Adrenal gland (tissue), 19 donors: ENCODE measurements at regions of chr13 and their contacts with region 1.

Region 1: GRCh38 chr13:108322206-108322824 is 52.8 kb downstream of the TNFSF13B start:
- DNase-seq: no peak
- H3K4me3 ChIP-seq: no peak overlapping the region
- H3K27ac ChIP-seq: no peak overlapping the region
- H3K4me1 ChIP-seq: no peaks in the 10 kb centered on the region
- H3K27me3 ChIP-seq: no peaks in the 10 kb centered on the region
- CTCF ChIP-seq: peak; percentile 52 to 77 (median 72)
- POLR2A ChIP-seq: no peak

Region 2: DNA sequence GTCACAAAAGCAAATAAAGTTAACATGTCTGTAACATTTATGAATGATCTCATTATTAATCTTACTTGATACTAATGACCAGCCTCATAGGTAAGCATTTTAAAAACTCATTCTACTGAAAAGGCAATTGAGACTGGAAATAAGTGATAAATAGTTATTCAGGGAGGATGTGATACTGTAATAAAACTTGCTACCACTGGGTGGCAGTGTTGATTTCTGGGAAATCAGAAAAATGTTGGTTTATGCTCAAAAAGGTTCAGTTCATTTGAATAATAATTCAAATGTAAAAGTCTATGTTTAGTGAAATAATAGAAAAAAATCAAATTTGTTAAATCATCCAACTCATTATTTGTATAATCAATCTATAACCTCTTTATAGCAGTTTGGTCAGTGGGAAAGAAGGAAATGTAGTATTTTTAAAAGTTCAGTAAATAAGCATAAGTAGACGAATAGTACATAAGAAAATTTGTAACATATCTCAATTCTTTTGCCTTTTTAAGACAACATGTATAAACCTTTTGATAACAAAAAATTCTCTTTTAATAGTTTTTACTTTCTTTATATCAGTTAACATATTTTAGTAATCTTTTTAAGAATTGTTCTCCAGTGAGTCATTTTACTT is 94.6 kb before region 1 on chr13:
- intact Hi-C with region 1: loop called in 1 of 2 experiments (anchors 10 kb)
- DNase-seq: peak in 3 of 7 donors; percentile 21 to 32 (median 32)
- H3K4me3 ChIP-seq: no peak overlapping the region
- H3K27ac ChIP-seq: no peak overlapping the region
- H3K4me1 ChIP-seq: peaks cover 0 to 27% of the 10 kb centered on the region in 2 donors
- H3K27me3 ChIP-seq: no peaks in the 10 kb centered on the region
- CTCF ChIP-seq: peak; percentile 67 to 89 (median 80)
- POLR2A ChIP-seq: no peak

Region 3: GRCh38 chr13:108895220-108895704 is 572.9 kb after region 1 on chr13:
- intact Hi-C with region 1: loop called in 1 of 2 experiments (anchors 10 kb)
- DNase-seq: no peak
- H3K4me3 ChIP-seq: no peak overlapping the region
- H3K27ac ChIP-seq: no peak overlapping the region
- H3K4me1 ChIP-seq: no peaks in the 10 kb centered on the region
- H3K27me3 ChIP-seq: no peaks in the 10 kb centered on the region
- CTCF ChIP-seq: peak; percentile 29 to 65 (median 49)
- POLR2A ChIP-seq: no peak